ENCODE measurements at regions of chr2 and their contacts with region 1.

Region 1: GRCh38 chr2:65040400-65041261 is 15.6 kb upstream of the CEP68 start:
- DNase-seq: no peak
- H3K4me3 ChIP-seq: peak overlapping the region in 1 of 2 donors; percentile 8
- H3K27ac ChIP-seq: no peak overlapping the region
- H3K4me1 ChIP-seq: no peaks in the 10 kb centered on the region
- H3K27me3 ChIP-seq: no peaks in the 10 kb centered on the region
- CTCF ChIP-seq: peak; percentile 90 to 93 (median 92)
- POLR2A ChIP-seq: no peak

Region 2: GRCh38 chr2:64918220-64918886 is 122.3 kb before region 1 on chr2:
- intact Hi-C with region 1: loop called (anchors 2 kb)
- DNase-seq: no peak
- H3K4me3 ChIP-seq: peak overlapping the region; percentile 28 to 43
- H3K27ac ChIP-seq: peak overlapping the region; percentile 40
- H3K4me1 ChIP-seq: peaks cover 13% of the 10 kb centered on the region
- H3K27me3 ChIP-seq: no peaks in the 10 kb centered on the region
- CTCF ChIP-seq: no peak
- POLR2A ChIP-seq: no peak

Region 3: DNA sequence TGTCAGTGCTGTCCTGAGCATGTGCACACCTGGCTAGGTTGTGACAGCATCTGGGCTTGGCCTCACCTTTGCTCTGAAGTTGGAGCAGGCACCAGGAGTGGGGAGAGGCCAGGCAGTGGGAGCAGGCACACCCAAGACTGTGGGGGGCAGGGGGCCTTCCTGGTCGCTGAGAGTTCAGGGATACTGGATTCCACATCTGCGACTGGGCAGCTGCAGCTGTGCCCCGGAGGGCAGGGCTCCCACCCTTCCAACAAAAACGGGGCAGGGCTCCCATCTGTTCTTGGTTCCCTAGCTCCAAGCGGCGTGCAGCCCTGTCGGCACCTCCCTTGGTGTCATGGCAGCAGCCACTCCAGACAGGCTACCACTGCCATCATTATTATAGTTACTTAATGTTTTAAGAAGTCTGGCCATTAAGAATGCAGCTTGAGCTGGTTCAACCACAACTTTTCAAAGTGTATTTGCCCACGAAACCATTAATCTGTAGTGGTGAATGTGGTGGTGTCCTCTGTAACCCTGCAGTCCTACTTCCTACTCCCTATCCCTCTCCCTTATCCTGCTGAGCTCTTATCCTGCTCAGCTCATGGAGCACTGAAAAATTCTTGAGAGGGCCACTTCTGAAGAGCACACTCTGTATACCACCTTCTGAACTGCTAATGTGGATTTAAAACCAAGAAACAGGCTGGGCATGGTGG is 137.3 kb after region 1 on chr2:
- intact Hi-C with region 1: no loop called
- DNase-seq: no peak
- H3K4me3 ChIP-seq: no peak overlapping the region
- H3K27ac ChIP-seq: no peak overlapping the region
- H3K4me1 ChIP-seq: no peaks in the 10 kb centered on the region
- H3K27me3 ChIP-seq: no peaks in the 10 kb centered on the region
- CTCF ChIP-seq: no peak
- POLR2A ChIP-seq: no peak

Region 4: GRCh38 chr2:65710779-65711295 is 670.2 kb after region 1 on chr2:
- intact Hi-C with region 1: no loop called
- DNase-seq: no peak
- H3K4me3 ChIP-seq: no peak overlapping the region
- H3K27ac ChIP-seq: no peak overlapping the region
- H3K4me1 ChIP-seq: no peaks in the 10 kb centered on the region
- H3K27me3 ChIP-seq: no peaks in the 10 kb centered on the region
- CTCF ChIP-seq: no peak
- POLR2A ChIP-seq: no peak

Measured in vagina (tissue), 2 donors.